Sigmoid colon (tissue), 7 donors: ENCODE measurements at regions of chr1 and their contacts with region 1.

Region 1: DNA sequence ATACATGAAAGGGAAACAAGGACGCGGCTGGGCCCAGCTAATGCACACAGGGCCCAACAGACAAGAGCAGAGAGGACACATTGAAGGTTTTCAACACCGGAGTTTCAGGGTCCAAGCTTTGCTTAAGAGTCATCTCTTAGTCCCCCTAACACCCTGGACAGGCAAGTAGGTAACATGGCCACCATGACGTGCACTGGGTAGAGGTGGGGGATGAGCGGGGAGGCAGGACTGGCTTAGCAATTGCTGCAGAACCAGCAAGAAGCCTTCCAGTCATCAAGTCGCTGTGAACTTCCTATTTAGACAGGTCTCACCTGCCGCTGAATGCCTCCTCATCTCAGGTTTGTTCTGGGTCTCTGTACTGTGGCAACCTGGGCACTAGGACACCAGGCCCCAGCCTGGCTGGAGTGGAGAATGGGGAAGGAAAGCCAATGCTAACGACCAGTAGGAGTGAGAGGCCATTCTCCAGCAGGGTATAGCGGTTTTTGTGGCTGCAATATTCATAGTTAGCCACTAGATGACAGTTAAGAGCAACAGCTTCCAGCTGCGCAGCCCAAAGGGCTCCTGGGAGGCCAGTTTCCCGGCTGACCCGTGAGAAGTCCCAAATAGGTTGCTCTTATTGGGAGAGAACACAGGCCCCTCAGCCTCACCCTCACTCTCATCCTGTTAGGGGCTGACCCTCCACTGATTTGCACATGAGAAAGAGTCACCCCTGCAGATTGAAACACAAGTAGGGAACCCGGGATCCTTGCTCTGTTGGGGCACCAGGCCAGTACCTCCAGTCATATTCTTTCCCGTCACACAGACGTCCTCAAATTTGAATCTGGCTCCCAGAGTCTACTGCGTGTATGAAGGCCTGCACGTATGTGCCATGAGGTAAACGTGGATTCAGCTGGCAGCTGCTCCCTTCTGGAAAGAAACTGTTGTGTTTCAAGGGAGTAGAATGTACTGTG is 6.0 kb upstream of the PIGC start:
- DNase-seq: peak; percentile 74
- H3K4me3 ChIP-seq: peak overlapping the region in 1 of 4 donors; percentile 6
- H3K27ac ChIP-seq: peak overlapping the region in 1 of 4 donors; percentile 10
- H3K4me1 ChIP-seq: peaks cover 0 to 9% (median 3%) of the 10 kb centered on the region in 4 donors
- H3K27me3 ChIP-seq: no peaks in the 10 kb centered on the region
- CTCF ChIP-seq: peak; percentile 62 to 93 (median 84)
- EP300 ChIP-seq: no peak
- POLR2A ChIP-seq: no peak

Region 2: GRCh38 chr1:172532700-172533509 is 83.0 kb after region 1 on chr1 and contains the start of gene SUCO:
- intact Hi-C with region 1: loop called (anchors 2 kb)
- DNase-seq: peak; percentile 100
- H3K4me3 ChIP-seq: peak within 1 kb of the TSS; percentile 82 to 94 (median 89)
- H3K27ac ChIP-seq: peak within 1 kb of the TSS; percentile 96 to 99 (median 98)
- H3K4me1 ChIP-seq: peaks cover 0 to 42% (median 23%) of the 10 kb centered on the region in 4 donors
- H3K27me3 ChIP-seq: no peaks in the 10 kb centered on the region
- CTCF ChIP-seq: no peak
- EP300 ChIP-seq: peak in 1 of 4 donors; percentile 34
- POLR2A ChIP-seq: peak; percentile 86 to 93
- total RNA-seq, gene SUCO: 27.4 to 36.6 (median 33.4) TPM

Region 3: DNA sequence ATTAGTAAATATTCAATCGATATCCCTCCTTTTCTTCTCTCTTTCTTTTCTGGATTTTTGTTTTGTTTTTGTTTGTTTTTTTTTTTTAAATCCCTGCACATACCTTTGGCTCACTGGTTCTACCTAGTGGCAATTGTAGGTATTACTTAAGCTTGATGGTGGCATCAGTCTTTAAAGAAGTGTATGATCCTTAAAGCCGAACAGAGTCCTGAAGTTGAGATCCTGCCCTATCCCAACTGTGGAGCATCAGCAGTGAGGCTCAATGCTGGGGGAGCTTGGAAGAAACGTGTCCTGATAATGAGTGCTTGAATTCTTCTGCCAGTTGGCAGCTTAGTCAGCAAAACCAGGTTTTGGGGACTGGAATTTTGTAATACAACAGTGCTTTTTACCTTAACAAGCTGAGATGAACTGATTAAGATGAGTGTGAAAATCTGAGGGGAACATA is 269.9 kb after region 1 on chr1:
- intact Hi-C with region 1: no loop called
- DNase-seq: no peak
- H3K4me3 ChIP-seq: no peak overlapping the region
- H3K27ac ChIP-seq: no peak overlapping the region
- H3K4me1 ChIP-seq: no peaks in the 10 kb centered on the region
- H3K27me3 ChIP-seq: no peaks in the 10 kb centered on the region
- CTCF ChIP-seq: peak in 3 of 4 experiments; percentile 37 to 52 (median 47)
- EP300 ChIP-seq: no peak
- POLR2A ChIP-seq: no peak